Activated CD8-positive, alpha-beta T cell treated with anti-CD3 and anti-CD28 coated beads for 36 hours (primary cell): ENCODE measurements at regions of chr2 and their contacts with region 1.

Region 1: DNA sequence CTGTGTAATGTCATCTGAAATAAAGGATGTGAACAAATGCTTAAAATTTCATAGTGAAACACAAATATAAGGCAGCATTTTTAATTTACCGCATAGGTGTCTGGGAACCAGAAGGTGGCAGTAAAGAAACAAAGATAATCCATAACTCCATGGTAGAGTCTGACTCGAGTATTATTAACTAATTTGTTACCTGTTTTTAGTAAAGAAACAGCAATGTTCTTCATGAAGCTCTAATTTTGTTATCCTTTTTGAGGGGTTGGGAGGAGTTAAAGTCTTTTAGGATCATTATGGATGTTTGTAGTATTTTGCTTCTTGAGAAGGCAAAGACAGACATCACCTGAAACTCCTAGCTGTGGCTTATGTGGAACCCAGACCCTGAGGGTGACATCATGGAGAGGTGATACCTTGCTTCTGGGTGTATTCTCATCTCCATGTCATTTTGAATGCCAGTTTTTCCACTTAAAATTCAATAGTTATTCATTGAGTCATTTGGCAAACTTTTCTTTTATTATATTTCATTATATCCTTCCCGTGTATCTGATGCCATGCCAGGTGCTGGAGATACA is 286.2 kb upstream of the EPAS1 start:
- DNase-seq: no peak
- ATAC-seq: peak; percentile 79
- H3K4me3 Mint-ChIP-seq: no peak overlapping the region
- H3K27ac Mint-ChIP-seq: no peak overlapping the region
- H3K4me1 Mint-ChIP-seq: peaks cover 3% of the 10 kb centered on the region
- H3K27me3 Mint-ChIP-seq: no peaks in the 10 kb centered on the region
- CTCF ChIP-seq: peak; percentile 82

Region 2: DNA sequence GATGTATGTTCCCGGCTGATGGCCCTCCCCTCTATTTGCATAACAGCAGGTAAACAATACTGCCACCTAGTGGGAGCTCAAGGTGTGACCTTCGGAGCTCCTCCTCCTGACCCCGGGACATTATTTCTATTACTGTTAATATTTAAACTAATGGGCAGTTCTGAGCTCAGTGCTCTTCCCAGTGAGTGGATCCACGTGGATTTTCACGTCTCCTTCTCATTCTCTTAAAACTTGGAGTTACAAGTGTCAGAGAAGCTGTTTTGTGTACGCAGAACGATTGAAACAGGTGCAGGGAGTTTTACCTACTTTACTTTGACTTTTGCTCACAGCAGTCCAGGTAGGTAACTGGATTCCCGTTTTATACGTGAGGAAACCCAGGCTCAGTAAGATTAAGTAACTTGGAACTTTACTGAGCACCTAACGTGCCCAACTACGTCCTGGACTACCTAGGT is 232.3 kb before region 1 on chr2:
- CTCF ChIA-PET with region 1: no interaction called
- POLR2A ChIA-PET with region 1: no interaction called
- intact Hi-C with region 1: no loop called
- DNase-seq: peak; percentile 77
- ATAC-seq: peak; percentile 88
- H3K4me3 Mint-ChIP-seq: no peak overlapping the region
- H3K27ac Mint-ChIP-seq: no peak overlapping the region
- H3K4me1 Mint-ChIP-seq: peaks cover 3% of the 10 kb centered on the region
- H3K27me3 Mint-ChIP-seq: no peaks in the 10 kb centered on the region
- CTCF ChIP-seq: peak; percentile 93

Region 3: GRCh38 chr2:45889053-45889452 is 122.0 kb before region 1 on chr2:
- CTCF ChIA-PET with region 1: no interaction called
- POLR2A ChIA-PET with region 1: no interaction called
- intact Hi-C with region 1: no loop called
- DNase-seq: peak; percentile 66
- ATAC-seq: peak; percentile 96
- H3K4me3 Mint-ChIP-seq: no peak overlapping the region
- H3K27ac Mint-ChIP-seq: no peak overlapping the region
- H3K4me1 Mint-ChIP-seq: peaks cover 33% of the 10 kb centered on the region
- H3K27me3 Mint-ChIP-seq: no peaks in the 10 kb centered on the region
- CTCF ChIP-seq: no peak

Region 4: GRCh38 chr2:46364797-46365457 is 353.9 kb after region 1 on chr2:
- CTCF ChIA-PET with region 1: interaction called, 19 read pairs
- POLR2A ChIA-PET with region 1: no interaction called
- intact Hi-C with region 1: loop called (anchors 2 kb)
- DNase-seq: peak; percentile 52
- ATAC-seq: peak; percentile 57
- H3K4me3 Mint-ChIP-seq: no peak overlapping the region
- H3K27ac Mint-ChIP-seq: no peak overlapping the region
- H3K4me1 Mint-ChIP-seq: peaks cover 29% of the 10 kb centered on the region
- H3K27me3 Mint-ChIP-seq: no peaks in the 10 kb centered on the region
- CTCF ChIP-seq: peak; percentile 91